IMR-90 (cell line): ENCODE measurements at regions of chr6 and their contacts with region 1.

Region 1: GRCh38 chr6:88655586-88655985 is 307.8 kb downstream of the RNGTT start:
- DNase-seq: no peak
- ATAC-seq: no peak
- H3K4me3 ChIP-seq: no peak overlapping the region
- H3K27ac ChIP-seq: no peak overlapping the region
- H3K4me1 ChIP-seq: no peaks in the 10 kb centered on the region
- H3K27me3 ChIP-seq: no peaks in the 10 kb centered on the region
- CTCF ChIP-seq: no peak
- POLR2A ChIP-seq: no peak
- RAD21 ChIP-seq: no peak

Region 2: GRCh38 chr6:88676728-88677127 is 21.1 kb after region 1 on chr6:
- CTCF ChIA-PET with region 1: interaction called, 3 read pairs
- POLR2A ChIA-PET with region 1: no interaction called
- dilution Hi-C with region 1: no loop called
- in situ Hi-C with region 1: no loop called
- intact Hi-C with region 1: loop called (anchors 2 kb)
- DNase-seq: no peak
- ATAC-seq: no peak
- H3K4me3 ChIP-seq: no peak overlapping the region
- H3K27ac ChIP-seq: no peak overlapping the region
- H3K4me1 ChIP-seq: no peaks in the 10 kb centered on the region
- H3K27me3 ChIP-seq: no peaks in the 10 kb centered on the region
- CTCF ChIP-seq: no peak
- POLR2A ChIP-seq: no peak
- RAD21 ChIP-seq: no peak